ENCODE measurements at regions of chr18 and their contacts with region 1.

Region 1: DNA sequence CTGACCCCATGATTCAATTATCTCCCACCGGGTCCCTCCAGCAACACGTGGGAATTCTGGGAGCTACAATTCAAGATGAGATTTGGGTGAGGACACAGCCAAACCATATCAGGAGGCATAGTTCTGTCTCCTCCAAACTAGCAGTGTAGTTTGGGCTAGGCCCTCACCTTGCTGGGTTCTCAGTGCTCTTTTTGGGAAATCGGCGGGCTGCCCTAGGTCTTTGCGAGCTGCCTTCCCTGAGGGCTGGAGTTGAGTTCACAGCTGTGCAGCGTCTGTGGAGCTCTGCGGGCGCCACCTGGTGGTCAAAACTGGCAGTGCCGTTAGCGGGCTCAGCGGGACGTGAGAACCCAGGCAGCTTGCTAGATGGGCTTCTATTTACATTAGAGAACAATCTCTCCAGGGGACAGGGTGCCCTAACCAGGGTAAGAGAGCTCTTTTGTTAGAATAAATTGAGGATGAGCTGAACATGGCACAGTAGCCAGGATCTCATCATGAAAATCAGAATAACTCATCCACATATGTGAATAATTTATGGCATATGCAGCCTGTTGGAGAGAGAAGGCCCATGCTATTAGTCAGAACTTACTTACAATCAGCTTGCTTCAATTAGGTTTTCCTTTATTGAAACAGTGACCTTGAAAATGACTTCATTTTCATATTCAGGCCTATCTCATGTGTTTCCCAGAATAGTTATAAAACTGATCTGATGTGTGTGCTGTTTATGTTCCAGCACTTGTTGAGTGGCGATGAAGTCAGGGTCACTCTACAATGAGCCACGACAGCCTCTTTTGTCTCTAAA is 27.4 kb upstream of the YES1 start:
- DNase-seq: peak; percentile 79
- H3K4me3 Mint-ChIP-seq: no peak overlapping the region
- H3K27ac Mint-ChIP-seq: no peak overlapping the region
- H3K4me1 Mint-ChIP-seq: peaks cover 12% of the 10 kb centered on the region
- H3K27me3 Mint-ChIP-seq: no peaks in the 10 kb centered on the region
- CTCF ChIP-seq: peak; percentile 83

Region 2: GRCh38 chr18:136433-136832 is 703.0 kb before region 1 on chr18:
- CTCF ChIA-PET with region 1: no interaction called
- POLR2A ChIA-PET with region 1: no interaction called
- intact Hi-C with region 1: no loop called
- DNase-seq: no peak
- H3K4me3 Mint-ChIP-seq: no peak overlapping the region
- H3K27ac Mint-ChIP-seq: no peak overlapping the region
- H3K4me1 Mint-ChIP-seq: no peaks in the 10 kb centered on the region
- H3K27me3 Mint-ChIP-seq: no peaks in the 10 kb centered on the region
- CTCF ChIP-seq: no peak

Region 3: GRCh38 chr18:616380-616995 is 222.9 kb before region 1 on chr18:
- CTCF ChIA-PET with region 1: interaction called, 266 read pairs
- POLR2A ChIA-PET with region 1: no interaction called
- intact Hi-C with region 1: no loop called
- DNase-seq: peak; percentile 54
- H3K4me3 Mint-ChIP-seq: no peak overlapping the region
- H3K27ac Mint-ChIP-seq: no peak overlapping the region
- H3K4me1 Mint-ChIP-seq: peaks cover 10% of the 10 kb centered on the region
- H3K27me3 Mint-ChIP-seq: peaks cover 22% of the 10 kb centered on the region
- CTCF ChIP-seq: peak; percentile 69

Region 4: DNA sequence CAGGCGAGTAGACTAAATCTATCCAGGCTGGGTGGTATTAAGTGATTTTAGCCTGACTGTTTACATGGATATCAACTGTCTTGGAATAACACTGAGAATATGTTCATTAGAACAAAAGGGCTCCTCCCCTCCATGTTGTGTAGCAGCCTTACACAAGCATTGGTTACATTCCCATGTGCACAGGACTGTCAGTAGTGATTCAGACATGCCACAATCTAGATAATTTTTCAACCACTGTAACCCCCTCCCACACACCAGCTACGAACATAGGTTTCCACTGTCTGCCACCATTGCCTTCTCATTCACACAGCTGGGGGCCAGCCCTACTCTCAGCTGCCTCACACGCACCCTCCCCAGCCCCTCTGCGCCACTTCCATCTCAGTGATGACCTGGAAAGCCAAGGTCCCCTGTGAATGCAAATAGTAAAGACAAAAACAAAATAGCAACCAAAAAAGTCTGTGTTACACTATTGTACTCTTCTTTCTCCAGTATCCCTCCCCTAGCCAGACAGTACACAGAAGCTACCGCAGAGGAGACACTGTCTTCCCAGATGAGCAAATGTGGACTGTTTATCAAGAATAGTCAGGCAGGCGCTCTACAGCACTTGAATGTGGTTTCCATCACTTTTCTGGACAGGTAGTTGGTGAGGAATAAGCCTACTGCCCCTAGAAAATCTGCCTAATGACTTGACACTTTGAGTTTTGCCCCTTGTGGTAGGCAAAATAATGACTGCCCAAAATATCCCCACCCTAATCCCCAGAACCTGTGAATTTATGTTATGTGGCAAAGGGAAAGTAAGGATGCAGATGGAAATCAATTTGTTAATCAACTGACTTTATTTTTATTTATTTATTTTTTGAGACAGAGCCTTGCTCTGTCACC is 209.9 kb before region 1 on chr18:
- CTCF ChIA-PET with region 1: interaction called, 266 read pairs
- POLR2A ChIA-PET with region 1: no interaction called
- intact Hi-C with region 1: loop called (anchors 1 kb)
- DNase-seq: no peak
- H3K4me3 Mint-ChIP-seq: no peak overlapping the region
- H3K27ac Mint-ChIP-seq: no peak overlapping the region
- H3K4me1 Mint-ChIP-seq: peaks cover 16% of the 10 kb centered on the region
- H3K27me3 Mint-ChIP-seq: peaks cover 12% of the 10 kb centered on the region
- CTCF ChIP-seq: no peak

Region 5: DNA sequence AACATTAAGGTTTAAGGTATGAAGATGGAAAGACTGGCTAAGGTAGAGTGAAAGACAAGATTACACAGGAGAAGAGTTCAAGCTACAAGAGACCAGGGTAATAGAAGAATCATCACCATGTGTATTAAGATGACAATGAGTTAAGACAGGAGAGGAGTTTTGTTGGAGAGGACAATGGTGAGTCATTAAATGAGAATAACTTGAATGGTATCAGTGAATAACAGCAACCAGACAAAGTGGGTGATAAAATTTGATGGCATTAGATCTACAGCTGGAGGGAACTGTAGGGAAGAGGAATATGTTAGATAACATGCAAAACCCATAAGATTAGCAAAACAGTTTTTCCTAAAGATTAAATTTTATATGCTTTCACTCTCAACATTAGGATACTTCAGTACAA is 108.2 kb before region 1 on chr18:
- CTCF ChIA-PET with region 1: interaction called, 277 read pairs
- POLR2A ChIA-PET with region 1: no interaction called
- intact Hi-C with region 1: no loop called
- DNase-seq: no peak
- H3K4me3 Mint-ChIP-seq: no peak overlapping the region
- H3K27ac Mint-ChIP-seq: no peak overlapping the region
- H3K4me1 Mint-ChIP-seq: peaks cover 8% of the 10 kb centered on the region
- H3K27me3 Mint-ChIP-seq: no peaks in the 10 kb centered on the region
- CTCF ChIP-seq: no peak

Region 6: DNA sequence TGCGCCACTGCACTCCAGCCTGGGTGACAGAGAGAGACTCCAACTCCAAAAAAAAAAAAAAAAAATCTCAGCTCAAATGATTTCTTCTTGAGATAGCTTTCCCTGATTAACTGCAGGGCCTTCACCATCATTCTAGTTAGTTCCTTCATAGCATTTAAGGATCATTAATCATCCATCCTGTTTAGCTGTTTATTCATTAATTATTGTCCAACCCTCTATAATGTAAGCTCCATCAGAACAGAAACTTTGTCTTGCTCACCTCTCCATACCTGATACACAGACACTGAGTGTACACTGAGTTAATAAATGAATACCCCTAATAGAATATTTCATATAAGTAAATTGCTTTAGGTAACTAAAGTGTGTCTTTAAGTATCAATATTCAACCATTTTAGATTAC is 84.8 kb before region 1 on chr18:
- CTCF ChIA-PET with region 1: interaction called, 18 read pairs
- POLR2A ChIA-PET with region 1: no interaction called
- intact Hi-C with region 1: no loop called
- DNase-seq: no peak
- H3K4me3 Mint-ChIP-seq: no peak overlapping the region
- H3K27ac Mint-ChIP-seq: no peak overlapping the region
- H3K4me1 Mint-ChIP-seq: peaks cover 6% of the 10 kb centered on the region
- H3K27me3 Mint-ChIP-seq: no peaks in the 10 kb centered on the region
- CTCF ChIP-seq: no peak

Region 7: DNA sequence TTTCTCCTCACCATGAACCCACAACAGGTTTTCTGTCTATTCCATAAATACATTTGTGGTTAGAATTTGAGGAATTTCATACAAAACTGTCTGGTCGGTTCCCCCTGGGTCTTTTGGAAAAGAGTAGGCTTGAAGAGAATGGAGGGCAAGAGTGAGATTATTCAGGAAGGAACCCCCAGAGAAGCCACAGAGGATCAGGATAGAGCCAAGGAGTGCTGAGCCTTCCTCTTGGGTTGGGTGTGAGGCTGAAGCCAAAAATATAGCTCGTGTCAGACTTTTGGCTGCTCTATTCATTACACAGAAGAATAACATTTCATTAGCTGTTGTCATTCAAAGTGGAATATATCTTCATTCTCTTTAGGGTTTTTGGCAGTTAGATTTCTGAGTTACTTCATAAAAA is 18.6 kb after region 1 on chr18:
- CTCF ChIA-PET with region 1: interaction called, 20 read pairs
- POLR2A ChIA-PET with region 1: no interaction called
- intact Hi-C with region 1: no loop called
- DNase-seq: no peak
- H3K4me3 Mint-ChIP-seq: no peak overlapping the region
- H3K27ac Mint-ChIP-seq: no peak overlapping the region
- H3K4me1 Mint-ChIP-seq: no peaks in the 10 kb centered on the region
- H3K27me3 Mint-ChIP-seq: no peaks in the 10 kb centered on the region
- CTCF ChIP-seq: no peak

Region 8: DNA sequence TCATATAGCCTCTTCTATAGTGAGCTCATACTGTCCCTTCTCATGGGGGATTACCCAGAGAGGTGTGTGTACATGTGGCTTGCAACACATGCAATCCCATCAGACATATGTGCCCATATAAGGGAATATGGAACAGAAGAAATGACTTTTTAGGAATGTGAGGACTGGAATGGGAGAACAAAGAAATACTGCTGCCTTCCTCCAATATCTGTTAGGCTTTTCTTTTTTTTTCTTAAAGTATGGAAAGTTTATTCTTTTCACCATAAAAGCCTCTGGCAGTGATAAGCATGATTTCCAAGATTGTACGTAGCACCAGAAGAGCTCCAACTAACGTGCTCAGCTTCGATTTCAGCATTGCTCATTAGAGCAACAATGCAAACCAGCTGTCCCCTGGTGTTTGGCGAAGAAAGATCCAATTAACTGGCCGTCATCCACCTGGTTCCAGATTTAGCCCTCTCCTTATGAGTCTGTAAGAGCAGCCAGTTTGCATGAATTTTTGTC is 178.8 kb after region 1 on chr18:
- CTCF ChIA-PET with region 1: no interaction called
- POLR2A ChIA-PET with region 1: no interaction called
- intact Hi-C with region 1: no loop called
- DNase-seq: peak; percentile 6
- H3K4me3 Mint-ChIP-seq: no peak overlapping the region
- H3K27ac Mint-ChIP-seq: no peak overlapping the region
- H3K4me1 Mint-ChIP-seq: no peaks in the 10 kb centered on the region
- H3K27me3 Mint-ChIP-seq: no peaks in the 10 kb centered on the region
- CTCF ChIP-seq: no peak